Naive thymus-derived CD4-positive, alpha-beta T cell (primary cell): ENCODE measurements at regions of chr11 and their contacts with region 1.

Region 1: DNA sequence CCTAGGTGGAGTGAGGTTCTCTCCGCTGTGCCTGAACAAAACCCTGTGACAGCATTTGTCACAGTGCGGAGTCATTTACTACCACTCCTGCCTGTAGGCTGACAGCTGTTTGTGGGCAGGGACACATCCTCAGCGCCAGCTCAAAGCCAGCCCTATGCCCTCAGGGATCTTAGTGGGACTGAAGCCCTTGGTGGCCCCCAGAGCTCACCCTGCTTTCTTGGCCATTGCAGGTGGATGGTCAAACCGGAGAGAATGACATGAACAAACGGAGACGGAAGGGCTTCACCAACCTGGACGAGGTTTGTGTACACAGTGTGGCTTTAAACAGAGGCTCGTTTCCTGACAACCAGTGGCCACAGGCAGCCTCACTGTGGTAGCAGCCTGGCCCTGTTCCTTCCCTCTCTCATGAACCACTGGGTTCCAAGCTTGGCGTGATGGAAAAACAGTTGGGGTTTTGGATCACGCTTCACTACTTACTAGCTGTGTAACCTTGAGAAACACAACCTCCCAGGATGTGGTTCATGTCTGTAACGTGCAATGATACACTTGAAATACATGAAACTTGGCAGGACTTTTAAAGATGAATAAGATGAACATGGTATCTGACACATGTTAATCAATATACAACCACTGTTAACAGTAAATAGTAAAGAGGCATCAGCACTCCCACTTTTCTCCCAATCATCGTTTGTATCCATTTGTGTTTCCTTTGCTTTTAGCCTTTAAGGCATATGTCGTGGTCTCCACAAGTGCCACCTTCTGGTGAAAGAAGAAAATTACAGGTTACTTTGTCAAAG is 125.8 kb downstream of the MICAL2 start:
- DNase-seq: peak in 8 of 9 donors; percentile 33 to 78 (median 72)
- ATAC-seq: peak; percentile 79
- H3K4me3 ChIP-seq: no peak overlapping the region
- H3K4me3 Mint-ChIP-seq: peak overlapping the region; percentile 17 to 81 (median 68)
- H3K27ac ChIP-seq: no peak overlapping the region
- H3K27ac Mint-ChIP-seq: peak overlapping the region; percentile 27 to 95 (median 77)
- H3K4me1 ChIP-seq: peaks cover 9 to 10% of the 10 kb centered on the region in 2 donors
- H3K4me1 Mint-ChIP-seq: peaks cover 18 to 41% (median 23%) of the 10 kb centered on the region in 7 donors
- H3K27me3 ChIP-seq: no peaks in the 10 kb centered on the region
- H3K27me3 Mint-ChIP-seq: no peaks in the 10 kb centered on the region

Region 2: GRCh38 chr11:12117200-12117599 is 118.9 kb before region 1 on chr11:
- CTCF ChIA-PET with region 1: no interaction called
- POLR2A ChIA-PET with region 1: no interaction called
- intact Hi-C with region 1: loop called in 1 of 2 experiments (anchors 2 kb)
- DNase-seq: no peak
- ATAC-seq: no peak
- H3K4me3 ChIP-seq: no peak overlapping the region
- H3K4me3 Mint-ChIP-seq: peak overlapping the region in 1 of 10 donors; percentile 8
- H3K27ac ChIP-seq: no peak overlapping the region
- H3K27ac Mint-ChIP-seq: peak overlapping the region in 1 of 9 donors; percentile 84
- H3K4me1 ChIP-seq: no peaks in the 10 kb centered on the region
- H3K4me1 Mint-ChIP-seq: peaks cover 4 to 76% (median 8%) of the 10 kb centered on the region in 7 donors
- H3K27me3 ChIP-seq: no peaks in the 10 kb centered on the region
- H3K27me3 Mint-ChIP-seq: no peaks in the 10 kb centered on the region

Region 3: GRCh38 chr11:12157241-12157661 is 78.9 kb before region 1 on chr11:
- CTCF ChIA-PET with region 1: interaction called, 3 read pairs
- POLR2A ChIA-PET with region 1: interaction called, 3 read pairs
- intact Hi-C with region 1: loop called in 1 of 2 experiments (anchors 1 kb)
- DNase-seq: no peak
- ATAC-seq: peak; percentile 36
- H3K4me3 ChIP-seq: no peak overlapping the region
- H3K4me3 Mint-ChIP-seq: peak overlapping the region in 2 of 10 donors; percentile 23 to 51
- H3K27ac ChIP-seq: no peak overlapping the region
- H3K27ac Mint-ChIP-seq: peak overlapping the region in 5 of 9 donors; percentile 15 to 86 (median 46)
- H3K4me1 ChIP-seq: peaks cover 15% of the 10 kb centered on the region in 2 donors
- H3K4me1 Mint-ChIP-seq: peaks cover 15 to 87% (median 22%) of the 10 kb centered on the region in 7 donors
- H3K27me3 ChIP-seq: no peaks in the 10 kb centered on the region
- H3K27me3 Mint-ChIP-seq: no peaks in the 10 kb centered on the region

Region 4: GRCh38 chr11:12224537-12224893 is 11.6 kb before region 1 on chr11:
- CTCF ChIA-PET with region 1: interaction called, 38 read pairs
- POLR2A ChIA-PET with region 1: interaction called, 9 read pairs
- intact Hi-C with region 1: loop called (anchors 1 kb)
- DNase-seq: peak; percentile 55 to 86 (median 81)
- ATAC-seq: peak; percentile 97
- H3K4me3 ChIP-seq: peak overlapping the region; percentile 52
- H3K4me3 Mint-ChIP-seq: peak overlapping the region; percentile 67 to 91 (median 75)
- H3K27ac ChIP-seq: peak overlapping the region; percentile 54
- H3K27ac Mint-ChIP-seq: peak overlapping the region; percentile 87 to 97 (median 91)
- H3K4me1 ChIP-seq: peaks cover 36 to 41% of the 10 kb centered on the region in 2 donors
- H3K4me1 Mint-ChIP-seq: peaks cover 33 to 51% (median 47%) of the 10 kb centered on the region in 7 donors
- H3K27me3 ChIP-seq: no peaks in the 10 kb centered on the region
- H3K27me3 Mint-ChIP-seq: no peaks in the 10 kb centered on the region